ENCODE measurements at regions of chr9 and their contacts with region 1.

Region 1: DNA sequence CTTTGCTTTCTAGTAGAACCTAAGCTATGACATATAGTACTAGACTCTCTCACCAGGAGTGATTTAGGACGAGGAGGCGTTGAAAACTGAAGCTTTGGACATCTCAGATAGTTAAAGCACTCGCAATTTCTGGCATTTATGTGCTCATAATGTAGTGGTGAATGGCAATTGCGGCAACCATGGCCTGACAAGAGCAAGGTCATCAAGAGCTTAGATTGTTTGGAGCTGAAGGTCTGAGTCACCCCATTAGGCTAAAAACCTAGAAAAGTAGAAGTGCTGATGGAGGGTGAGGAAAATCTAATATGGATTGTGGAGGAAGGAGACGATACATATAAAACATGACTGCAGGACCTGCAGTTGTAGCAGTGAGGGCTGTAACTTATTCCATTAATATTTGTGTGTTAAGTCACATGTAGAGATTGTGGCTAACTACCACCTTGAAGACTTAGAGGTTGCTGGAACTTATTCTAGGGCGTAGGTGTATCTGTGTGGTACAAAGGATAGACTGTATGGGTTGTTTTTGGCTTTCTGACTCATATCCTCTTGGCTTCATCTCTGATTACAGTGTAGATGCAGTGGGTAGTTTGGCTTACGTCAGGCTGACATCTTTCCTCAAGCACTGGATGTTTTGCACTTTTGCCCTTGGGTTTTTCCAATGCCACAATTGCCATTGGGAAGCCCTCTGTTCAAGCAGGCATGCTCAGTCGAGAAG is 138.9 kb upstream of the CDKN2B start:
- H3K4me3 Mint-ChIP-seq: no peak overlapping the region
- H3K27ac Mint-ChIP-seq: no peak overlapping the region
- H3K4me1 Mint-ChIP-seq: peaks cover 18% of the 10 kb centered on the region
- H3K27me3 Mint-ChIP-seq: peaks cover 37% of the 10 kb centered on the region

Region 2: DNA sequence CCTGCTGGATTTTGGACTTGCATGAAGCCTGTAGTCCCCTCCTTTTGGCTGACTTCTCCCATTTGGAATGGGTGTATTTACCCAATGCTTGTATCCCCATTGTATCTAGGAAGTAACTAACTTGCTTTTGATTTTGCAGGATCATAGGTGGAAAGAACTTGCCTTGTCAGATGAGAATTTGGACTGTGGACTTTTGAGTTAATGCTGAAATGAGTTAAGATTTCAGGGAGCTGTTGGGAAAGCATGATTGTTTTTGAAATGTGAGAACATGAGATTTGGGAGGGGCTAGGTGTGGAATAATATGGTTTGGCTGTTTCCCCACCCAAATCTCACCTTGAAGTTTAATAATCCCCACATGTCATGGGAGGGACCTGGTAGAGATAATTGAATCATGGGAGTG is 50.7 kb after region 1 on chr9:
- intact Hi-C with region 1: loop called (anchors 10 kb)
- H3K4me3 Mint-ChIP-seq: no peak overlapping the region
- H3K27ac Mint-ChIP-seq: no peak overlapping the region
- H3K4me1 Mint-ChIP-seq: peaks cover 17% of the 10 kb centered on the region
- H3K27me3 Mint-ChIP-seq: peaks cover 68% of the 10 kb centered on the region

Measured in dendritic cell treated with granulocyte-macrophage colony-stimulating factor and Interleukin-4, amounts not matched to agents 40 ng/mL and 50 ng/mL, for 4 days (primary cell).